ENCODE measurements at regions of chr12 and their contacts with region 1.

Region 1: GRCh38 chr12:26651566-26652188 is 181.3 kb downstream of the ITPR2 start:
- DNase-seq: peak; percentile 66
- ATAC-seq: no peak
- H3K4me3 Mint-ChIP-seq: no peak overlapping the region
- H3K27ac Mint-ChIP-seq: no peak overlapping the region
- H3K4me1 Mint-ChIP-seq: no peaks in the 10 kb centered on the region
- H3K27me3 Mint-ChIP-seq: no peaks in the 10 kb centered on the region

Region 2: DNA sequence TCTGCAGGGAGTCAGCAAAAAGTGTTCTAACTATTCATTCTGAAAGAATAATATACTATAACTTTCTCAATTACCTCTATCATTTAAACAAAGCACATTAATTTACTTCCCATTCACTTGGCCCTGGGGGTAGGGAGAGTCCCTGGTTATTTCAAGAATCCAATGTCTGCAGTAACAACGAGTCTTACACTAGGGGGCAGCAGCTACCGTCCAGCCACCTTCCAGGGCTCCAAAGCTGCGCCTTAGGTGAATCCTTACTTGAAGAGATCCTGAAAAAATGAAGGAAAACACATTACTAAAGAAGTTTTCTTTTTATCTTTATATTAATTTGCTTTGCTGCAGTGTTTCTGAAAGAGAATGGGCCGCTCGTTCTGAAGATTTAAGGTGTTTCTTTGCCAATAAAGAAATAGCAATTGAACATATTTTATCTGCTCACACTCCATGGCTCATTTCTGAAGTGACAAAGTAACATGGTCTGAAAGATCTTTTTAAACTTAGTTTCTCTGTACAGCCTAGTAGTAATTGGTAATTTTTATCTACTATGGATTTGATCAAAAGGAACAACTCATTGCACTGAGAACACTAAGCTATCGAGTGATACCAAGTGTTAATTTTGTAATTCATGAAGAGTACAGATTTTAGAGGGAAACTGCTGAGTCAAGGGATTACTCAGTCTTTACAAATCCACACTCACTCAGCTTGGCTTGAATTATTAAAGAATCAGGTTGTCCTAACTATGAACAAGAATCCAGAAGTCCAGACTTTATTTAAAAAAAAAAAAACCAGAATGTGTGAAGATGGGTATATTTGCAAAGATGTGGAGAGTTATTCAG is 554.4 kb before region 1 on chr12:
- CTCF ChIA-PET with region 1: interaction called, 12 read pairs
- POLR2A ChIA-PET with region 1: no interaction called
- DNase-seq: peak; percentile 64
- ATAC-seq: peak; percentile 75
- H3K4me3 Mint-ChIP-seq: no peak overlapping the region
- H3K27ac Mint-ChIP-seq: no peak overlapping the region
- H3K4me1 Mint-ChIP-seq: peaks cover 4% of the 10 kb centered on the region
- H3K27me3 Mint-ChIP-seq: peaks cover 21% of the 10 kb centered on the region

Region 3: DNA sequence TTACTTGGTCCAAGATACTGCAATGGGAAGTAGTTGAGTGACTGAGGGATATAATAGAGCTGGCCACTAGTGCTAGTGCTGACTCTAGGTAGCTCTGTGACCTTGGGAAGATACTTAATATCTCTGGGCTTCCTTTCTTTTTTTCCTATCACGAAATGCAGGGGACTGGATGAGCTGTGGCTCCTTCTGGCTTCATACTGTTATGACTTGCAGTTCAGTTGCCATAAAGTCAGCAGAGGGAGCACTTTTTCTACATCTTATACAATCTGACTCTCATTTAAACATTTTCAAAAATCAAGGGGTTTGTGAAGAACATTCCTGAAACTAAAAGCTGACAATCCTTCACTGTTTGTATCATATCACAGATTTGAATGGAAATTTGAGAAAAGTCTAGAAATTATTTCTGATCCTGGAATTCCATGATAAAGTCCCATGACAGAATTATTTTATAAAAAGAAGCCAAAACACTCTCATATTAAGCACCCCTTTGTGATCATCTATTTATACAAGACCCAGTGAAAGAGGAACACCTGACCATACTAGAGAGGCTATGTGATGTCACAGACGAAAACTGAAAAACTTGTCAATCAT is 532.2 kb before region 1 on chr12:
- CTCF ChIA-PET with region 1: interaction called, 11 read pairs
- POLR2A ChIA-PET with region 1: no interaction called
- DNase-seq: no peak
- ATAC-seq: no peak
- H3K4me3 Mint-ChIP-seq: no peak overlapping the region
- H3K27ac Mint-ChIP-seq: no peak overlapping the region
- H3K4me1 Mint-ChIP-seq: peaks cover 20% of the 10 kb centered on the region
- H3K27me3 Mint-ChIP-seq: peaks cover 70% of the 10 kb centered on the region

Region 4: DNA sequence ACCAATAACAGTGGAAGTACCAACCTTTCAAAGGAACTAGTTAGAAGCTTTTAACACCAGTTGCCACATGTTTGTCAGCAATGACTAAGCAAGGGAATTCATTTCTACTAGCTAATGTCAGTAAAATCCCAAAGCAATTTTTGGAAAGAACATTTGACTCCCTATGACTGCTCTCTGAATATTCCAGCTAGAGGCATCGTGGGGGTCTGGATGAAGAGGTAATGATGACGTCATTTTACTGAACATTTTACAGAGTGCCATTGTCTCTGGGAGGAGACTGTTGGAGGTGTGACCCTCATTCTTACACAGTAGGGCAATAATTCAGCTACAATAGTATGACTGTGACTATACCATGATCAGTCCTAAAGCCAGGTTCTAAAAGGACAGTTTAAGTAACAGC is 23.4 kb before region 1 on chr12:
- CTCF ChIA-PET with region 1: interaction called, 13 read pairs
- POLR2A ChIA-PET with region 1: no interaction called
- DNase-seq: no peak
- ATAC-seq: no peak
- H3K4me3 Mint-ChIP-seq: no peak overlapping the region
- H3K27ac Mint-ChIP-seq: no peak overlapping the region
- H3K4me1 Mint-ChIP-seq: peaks cover 18% of the 10 kb centered on the region
- H3K27me3 Mint-ChIP-seq: no peaks in the 10 kb centered on the region

Region 5: GRCh38 chr12:26633591-26634210 is 18.0 kb before region 1 on chr12:
- CTCF ChIA-PET with region 1: interaction called, 13 read pairs
- POLR2A ChIA-PET with region 1: no interaction called
- DNase-seq: no peak
- ATAC-seq: no peak
- H3K4me3 Mint-ChIP-seq: no peak overlapping the region
- H3K27ac Mint-ChIP-seq: no peak overlapping the region
- H3K4me1 Mint-ChIP-seq: peaks cover 7% of the 10 kb centered on the region
- H3K27me3 Mint-ChIP-seq: no peaks in the 10 kb centered on the region

Region 6: GRCh38 chr12:26668847-26669246 is 17.2 kb after region 1 on chr12:
- CTCF ChIA-PET with region 1: no interaction called
- POLR2A ChIA-PET with region 1: no interaction called
- DNase-seq: no peak
- ATAC-seq: no peak
- H3K4me3 Mint-ChIP-seq: no peak overlapping the region
- H3K27ac Mint-ChIP-seq: no peak overlapping the region
- H3K4me1 Mint-ChIP-seq: no peaks in the 10 kb centered on the region
- H3K27me3 Mint-ChIP-seq: no peaks in the 10 kb centered on the region

Region 7: DNA sequence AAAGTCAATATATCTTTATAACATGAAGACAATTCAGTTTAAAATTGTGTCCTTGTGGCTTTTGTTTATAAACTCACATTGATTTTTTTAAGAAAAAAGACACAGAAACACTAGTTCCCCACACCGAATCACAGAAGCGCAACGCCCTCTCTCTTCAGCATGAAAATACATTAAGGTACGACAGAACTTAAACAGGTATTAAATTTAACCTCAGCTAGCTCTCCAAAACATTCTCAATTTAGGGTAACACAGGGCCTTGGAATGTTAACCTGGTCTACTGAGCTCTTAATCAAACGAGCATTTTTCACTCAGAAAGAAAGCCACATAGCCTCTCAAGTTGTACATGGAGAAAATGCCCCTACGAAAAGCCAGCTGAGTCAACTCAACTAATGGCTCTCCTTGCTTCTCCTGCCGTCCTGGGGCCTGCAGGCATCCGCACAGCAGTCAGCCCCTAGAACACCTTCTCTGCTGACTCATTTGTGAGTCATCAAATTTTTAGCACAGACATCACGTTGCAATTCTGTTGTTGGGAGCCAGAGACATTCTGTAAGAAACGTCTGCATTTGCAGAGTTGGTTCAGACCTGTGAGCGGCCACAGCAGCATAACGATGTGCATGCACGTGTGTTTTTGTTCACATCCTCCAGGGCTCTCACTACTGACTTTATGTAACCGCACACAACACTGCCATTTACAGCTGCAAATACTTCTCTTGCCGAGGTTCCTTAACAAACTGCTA is 39.7 kb after region 1 on chr12:
- CTCF ChIA-PET with region 1: no interaction called
- POLR2A ChIA-PET with region 1: no interaction called
- DNase-seq: no peak
- ATAC-seq: no peak
- H3K4me3 Mint-ChIP-seq: no peak overlapping the region
- H3K27ac Mint-ChIP-seq: no peak overlapping the region
- H3K4me1 Mint-ChIP-seq: no peaks in the 10 kb centered on the region
- H3K27me3 Mint-ChIP-seq: no peaks in the 10 kb centered on the region

Measured in activated CD8-positive, alpha-beta T cell treated with anti-CD3 and anti-CD28 coated beads, Interleukin-2, amount 10 ng/mL, durations not matched to agents 7 days and 5 days (primary cell).